ENCODE measurements at regions of chr6 and their contacts with region 1.

Region 1: DNA sequence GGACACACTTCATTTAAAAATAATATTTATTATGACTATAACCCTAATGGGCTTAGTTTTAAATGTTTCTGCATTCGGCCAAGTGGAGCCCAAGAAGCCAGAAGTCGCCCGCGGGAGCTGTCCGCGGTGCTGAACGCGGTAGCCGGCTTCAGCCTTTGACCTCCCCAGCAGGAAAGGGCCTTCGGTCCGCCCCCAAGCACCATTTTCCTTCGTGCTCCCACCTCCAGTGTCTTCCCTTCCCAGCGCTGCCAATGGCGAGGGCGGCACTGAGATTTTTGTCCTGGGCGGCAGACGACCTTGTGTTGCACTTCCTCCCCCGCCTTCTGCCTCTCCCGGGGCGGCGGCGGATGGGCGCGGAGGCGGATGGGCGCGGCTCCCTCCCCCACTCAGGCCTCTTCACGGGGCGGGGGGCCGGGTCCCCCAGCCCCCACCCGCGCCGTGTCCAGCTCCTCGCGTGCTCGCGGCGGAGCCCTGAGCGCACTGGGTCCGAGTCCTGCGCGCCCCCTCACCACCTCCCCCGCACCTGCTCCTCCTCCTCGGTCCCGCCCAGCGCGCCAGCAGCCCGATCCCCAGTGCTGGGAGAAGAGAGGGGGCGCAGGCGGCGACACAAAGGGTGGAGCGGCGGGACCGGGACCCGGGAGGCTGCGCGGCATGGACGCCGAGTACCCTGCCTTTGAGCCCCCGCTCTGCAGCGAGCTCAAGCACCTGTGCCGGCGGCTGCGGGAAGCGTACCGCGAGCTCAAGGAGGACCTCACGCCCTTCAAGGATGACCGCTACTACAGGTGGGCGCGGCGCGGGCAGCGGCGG is 23.6 kb upstream of the TMEM181 start:
- H3K4me3 Mint-ChIP-seq: peak overlapping the region; percentile 84
- H3K27ac Mint-ChIP-seq: no peak overlapping the region
- H3K4me1 Mint-ChIP-seq: peaks cover 13% of the 10 kb centered on the region
- H3K27me3 Mint-ChIP-seq: peaks cover 74% of the 10 kb centered on the region

Region 2: DNA sequence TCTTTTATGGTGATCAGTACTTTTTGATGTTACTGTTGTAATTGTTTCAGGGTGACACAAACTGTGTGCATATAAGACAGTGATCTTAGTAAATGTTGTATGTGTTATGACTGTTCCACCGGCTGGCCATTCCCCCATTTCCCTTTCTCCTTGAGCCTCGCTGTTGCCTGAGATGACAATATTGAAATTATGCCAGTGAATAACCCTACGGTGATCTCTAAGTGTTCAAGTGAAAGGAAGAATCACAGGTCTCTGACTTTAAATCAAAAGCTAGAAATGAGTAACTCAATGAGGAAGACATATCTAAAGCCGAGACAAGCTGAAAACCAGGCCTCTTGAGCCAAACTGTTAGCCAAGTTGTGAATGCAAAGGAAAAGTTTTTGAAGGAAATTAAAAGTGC is 191.8 kb before region 1 on chr6:
- intact Hi-C with region 1: no loop called
- H3K4me3 Mint-ChIP-seq: no peak overlapping the region
- H3K27ac Mint-ChIP-seq: no peak overlapping the region
- H3K4me1 Mint-ChIP-seq: no peaks in the 10 kb centered on the region
- H3K27me3 Mint-ChIP-seq: no peaks in the 10 kb centered on the region

Region 3: GRCh38 chr6:158559895-158560835 is 23.9 kb after region 1 on chr6 and contains the start of gene TMEM181:
- intact Hi-C with region 1: loop called (anchors 2 kb)
- H3K4me3 Mint-ChIP-seq: peak within 1 kb of the TSS; percentile 87
- H3K27ac Mint-ChIP-seq: peak within 1 kb of the TSS; percentile 91
- H3K4me1 Mint-ChIP-seq: peaks cover 43% of the 10 kb centered on the region
- H3K27me3 Mint-ChIP-seq: peaks cover 4% of the 10 kb centered on the region

Region 4: GRCh38 chr6:158772851-158773371 is 236.6 kb after region 1 on chr6:
- intact Hi-C with region 1: no loop called
- H3K4me3 Mint-ChIP-seq: no peak overlapping the region
- H3K27ac Mint-ChIP-seq: no peak overlapping the region
- H3K4me1 Mint-ChIP-seq: peaks cover 16% of the 10 kb centered on the region
- H3K27me3 Mint-ChIP-seq: no peaks in the 10 kb centered on the region